ENCODE measurements at regions of chr14 and their contacts with region 1.

Region 1: GRCh38 chr14:63852817-63853731 is at the start of gene SYNE2:
- DNase-seq: peak; percentile 82
- ATAC-seq: peak; percentile 93 to 95
- total RNA-seq, gene SYNE2: 96.3 to 173 TPM

Region 2: GRCh38 chr14:63686951-63687350 is 166.1 kb before region 1 on chr14:
- intact Hi-C with region 1: no loop called
- DNase-seq: no peak
- ATAC-seq: no peak

Region 3: GRCh38 chr14:63952933-63953437 is 99.9 kb after region 1 on chr14:
- intact Hi-C with region 1: loop called in 1 of 2 experiments (anchors 10 kb)
- DNase-seq: no peak
- ATAC-seq: peak; percentile 19